ENCODE measurements at regions of chr18 and their contacts with region 1.

Region 1: DNA sequence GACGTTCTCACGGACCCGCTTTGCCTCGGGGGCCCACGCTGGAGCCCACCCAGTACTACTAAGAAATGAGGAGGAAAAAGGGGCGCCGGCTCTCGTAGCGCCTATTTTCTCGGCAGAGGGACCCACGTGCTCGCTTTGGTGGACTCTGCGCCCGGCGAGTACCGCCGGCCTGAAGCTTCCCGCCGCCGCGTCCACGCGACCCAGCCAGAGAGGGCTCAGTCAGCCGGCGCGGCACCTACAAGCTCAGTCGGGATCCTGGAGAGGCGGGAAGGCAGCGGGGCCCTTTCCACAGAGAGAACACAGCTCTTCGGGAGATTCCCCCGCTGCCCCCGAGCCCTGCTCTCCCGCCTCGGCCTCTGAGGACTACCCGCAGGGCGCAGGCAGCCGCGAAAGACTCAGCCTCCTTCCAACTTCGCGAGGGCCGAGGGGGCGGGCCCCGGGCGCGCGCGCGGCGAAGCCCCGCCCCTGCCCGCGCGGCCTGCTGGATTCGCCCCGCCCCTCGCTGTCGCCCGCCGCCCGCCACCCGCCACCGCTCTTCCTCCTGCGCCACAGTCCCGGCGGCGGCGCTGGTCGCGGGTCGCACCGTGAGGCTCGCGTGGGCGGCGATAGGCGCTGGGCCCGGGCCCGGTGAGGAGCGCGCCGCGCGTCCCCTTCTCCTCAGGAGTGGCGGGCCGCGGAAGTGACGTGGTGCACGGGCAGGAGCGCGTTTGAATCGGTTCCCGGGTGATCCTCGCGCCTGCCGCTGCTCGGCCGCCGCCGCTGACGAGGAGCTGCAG is at the start of gene SMCHD1:
- DNase-seq: peak; percentile 37
- ATAC-seq: peak; percentile 81
- H3K4me3 ChIP-seq: peak within 1 kb of the TSS; percentile 89 to 93
- H3K27ac ChIP-seq: peak within 1 kb of the TSS; percentile 93
- H3K4me1 ChIP-seq: peaks cover 30 to 42% of the 10 kb centered on the region in 2 experiments
- H3K27me3 ChIP-seq: no peaks in the 10 kb centered on the region
- CTCF ChIP-seq: no peak
- POLR2A ChIP-seq: peak; percentile 91
- RAD21 ChIP-seq: no peak
- total RNA-seq, gene SMCHD1: 48.6 TPM

Region 2: GRCh38 chr18:2536493-2536892 is 118.9 kb before region 1 on chr18:
- CTCF ChIA-PET with region 1: no interaction called
- POLR2A ChIA-PET with region 1: no interaction called
- RAD21 ChIA-PET with region 1: no interaction called
- intact Hi-C with region 1: no loop called
- DNase-seq: no peak
- ATAC-seq: no peak
- H3K4me3 ChIP-seq: no peak overlapping the region
- H3K27ac ChIP-seq: no peak overlapping the region
- H3K4me1 ChIP-seq: no peaks in the 10 kb centered on the region
- H3K27me3 ChIP-seq: no peaks in the 10 kb centered on the region
- CTCF ChIP-seq: no peak
- POLR2A ChIP-seq: no peak
- RAD21 ChIP-seq: no peak

Region 3: GRCh38 chr18:2571200-2572143 is 83.9 kb before region 1 on chr18 and contains the starts of genes METTL4 and NDC80:
- CTCF ChIA-PET with region 1: no interaction called
- POLR2A ChIA-PET with region 1: no interaction called
- RAD21 ChIA-PET with region 1: interaction called in 1 of 2 experiments, 3 read pairs
- intact Hi-C with region 1: loop called (anchors 5 kb)
- DNase-seq: peak; percentile 79
- ATAC-seq: peak; percentile 88
- H3K4me3 ChIP-seq: peak within 1 kb of the TSS; percentile 80 to 91
- H3K27ac ChIP-seq: peak within 1 kb of the TSS; percentile 91
- H3K4me1 ChIP-seq: peaks cover 8 to 16% of the 10 kb centered on the region in 2 experiments; a peak in 3 of 4 replicates
- H3K27me3 ChIP-seq: no peaks in the 10 kb centered on the region
- CTCF ChIP-seq: no peak
- POLR2A ChIP-seq: peak; percentile 55
- RAD21 ChIP-seq: no peak
- total RNA-seq, gene METTL4: 15.5 TPM
- total RNA-seq, gene NDC80: 46.0 TPM